HCT116 (cell line): ENCODE measurements at regions of chr5 and their contacts with region 1.

Region 1: GRCh38 chr5:36241631-36242533 is at the start of gene NADK2:
- DNase-seq: peak; percentile 90
- ATAC-seq: peak; percentile 87
- H3K4me3 ChIP-seq: peak within 1 kb of the TSS; percentile 65 to 75
- H3K27ac ChIP-seq: peak within 1 kb of the TSS; percentile 94
- H3K4me1 ChIP-seq: peaks cover 14 to 33% of the 10 kb centered on the region in 2 experiments; a peak in 3 of 4 replicates
- H3K27me3 ChIP-seq: no peaks in the 10 kb centered on the region
- CTCF ChIP-seq: peak; percentile 34 to 56 (median 55); a peak in 5 of 6 replicates
- POLR2A ChIP-seq: peak; percentile 36
- RAD21 ChIP-seq: peak; percentile 32; the same call in 1 of the 2 replicates
- total RNA-seq, gene NADK2: 21.2 TPM

Region 2: GRCh38 chr5:36151434-36152323 is 90.2 kb before region 1 on chr5 and contains the starts of genes LMBRD2 and SKP2:
- CTCF ChIA-PET with region 1: interaction called, 3 read pairs
- POLR2A ChIA-PET with region 1: no interaction called
- RAD21 ChIA-PET with region 1: no interaction called
- intact Hi-C with region 1: loop called (anchors 5 kb)
- DNase-seq: peak; percentile 92
- ATAC-seq: peak; percentile 98
- H3K4me3 ChIP-seq: peak within 1 kb of the TSS; percentile 73 to 81
- H3K27ac ChIP-seq: peak within 1 kb of the TSS; percentile 27
- H3K4me1 ChIP-seq: peaks cover 6 to 12% of the 10 kb centered on the region in 2 experiments; a peak in 3 of 4 replicates
- H3K27me3 ChIP-seq: no peaks in the 10 kb centered on the region
- CTCF ChIP-seq: no peak
- POLR2A ChIP-seq: peak; percentile 89
- RAD21 ChIP-seq: no peak
- total RNA-seq, gene LMBRD2: 1.1 TPM
- total RNA-seq, gene SKP2: 44.3 TPM

Region 3: GRCh38 chr5:36325196-36325595 is 83.3 kb after region 1 on chr5:
- CTCF ChIA-PET with region 1: no interaction called
- POLR2A ChIA-PET with region 1: no interaction called
- RAD21 ChIA-PET with region 1: no interaction called
- intact Hi-C with region 1: no loop called
- DNase-seq: no peak
- ATAC-seq: no peak
- H3K4me3 ChIP-seq: no peak overlapping the region
- H3K27ac ChIP-seq: no peak overlapping the region
- H3K4me1 ChIP-seq: no peaks in the 10 kb centered on the region
- H3K27me3 ChIP-seq: no peaks in the 10 kb centered on the region
- CTCF ChIP-seq: no peak
- POLR2A ChIP-seq: no peak
- RAD21 ChIP-seq: no peak

Region 4: DNA sequence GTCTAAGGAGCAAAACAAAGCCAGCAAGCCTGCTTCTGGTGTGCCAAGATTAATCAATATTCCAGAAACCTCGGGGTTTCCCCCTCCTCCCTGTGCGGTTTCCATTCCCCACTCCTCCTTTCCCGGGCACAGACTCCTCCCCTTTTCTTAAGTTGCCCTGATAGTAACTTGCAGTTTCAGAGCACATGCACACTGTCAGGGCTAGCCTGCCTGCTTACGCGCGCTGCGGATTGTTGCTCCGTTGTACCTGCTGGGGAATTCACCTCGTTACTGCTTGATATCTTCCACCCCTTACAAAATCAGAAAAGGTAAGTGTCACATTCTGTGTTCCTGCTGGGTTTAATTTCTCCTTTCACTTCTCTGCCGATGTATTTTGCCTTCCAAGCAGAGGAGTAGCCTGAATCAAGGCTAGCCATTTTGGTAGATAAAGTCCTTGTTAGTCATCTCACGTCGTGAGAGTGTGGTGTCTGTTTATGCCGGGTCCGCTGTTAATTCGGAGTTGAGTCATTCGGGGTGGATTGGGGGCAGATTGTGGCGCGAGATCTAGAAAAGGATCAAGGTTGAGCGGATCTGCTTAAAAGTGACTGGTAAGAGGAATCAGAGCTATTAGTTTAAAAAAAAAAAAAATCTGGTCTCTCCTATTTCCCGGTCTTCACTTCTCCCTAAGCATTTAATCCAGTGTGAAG is 364.7 kb after region 1 on chr5 and contains the start of gene SLC1A3:
- CTCF ChIA-PET with region 1: no interaction called
- POLR2A ChIA-PET with region 1: no interaction called
- RAD21 ChIA-PET with region 1: no interaction called
- intact Hi-C with region 1: loop called (anchors 10 kb)
- DNase-seq: peak; percentile 74
- ATAC-seq: peak; percentile 93
- H3K4me3 ChIP-seq: peak within 1 kb of the TSS; percentile 69
- H3K27ac ChIP-seq: peak within 1 kb of the TSS; percentile 67
- H3K4me1 ChIP-seq: peaks cover 8 to 27% of the 10 kb centered on the region in 2 experiments; a peak in 3 of 4 replicates
- H3K27me3 ChIP-seq: peaks cover 3% of the 10 kb centered on the region; the same call in 1 of the 2 replicates
- CTCF ChIP-seq: no peak
- POLR2A ChIP-seq: peak; percentile 85
- RAD21 ChIP-seq: no peak
- total RNA-seq, gene SLC1A3: 12.9 TPM